Activated naive CD4-positive, alpha-beta T cell treated with anti-CD3 and anti-CD28 coated beads for 36 hours (primary cell): ENCODE measurements at regions of chr18 and their contacts with region 1.

Region 1: GRCh38 chr18:79528846-79529245 is 133.1 kb downstream of the NFATC1 start:
- DNase-seq: peak; percentile 90
- H3K4me3 Mint-ChIP-seq: no peak overlapping the region
- H3K27ac Mint-ChIP-seq: no peak overlapping the region
- H3K4me1 Mint-ChIP-seq: peaks cover 32% of the 10 kb centered on the region
- H3K27me3 Mint-ChIP-seq: no peaks in the 10 kb centered on the region

Region 2: GRCh38 chr18:79644006-79644665 is 115.3 kb after region 1 on chr18:
- CTCF ChIA-PET with region 1: interaction called, 4 read pairs
- intact Hi-C with region 1: loop called (anchors 1 kb)
- DNase-seq: peak; percentile 78
- H3K4me3 Mint-ChIP-seq: no peak overlapping the region
- H3K27ac Mint-ChIP-seq: no peak overlapping the region
- H3K4me1 Mint-ChIP-seq: peaks cover 4% of the 10 kb centered on the region
- H3K27me3 Mint-ChIP-seq: peaks cover 9% of the 10 kb centered on the region